Activated CD4-positive, alpha-beta T cell treated with anti-CD3 and anti-CD28 coated beads, Interleukin-2, amount 10 ng/mL, durations not matched to agents 24 days and 14 days (primary cell): ENCODE measurements at regions of chr17 and their contacts with region 1.

Region 1: DNA sequence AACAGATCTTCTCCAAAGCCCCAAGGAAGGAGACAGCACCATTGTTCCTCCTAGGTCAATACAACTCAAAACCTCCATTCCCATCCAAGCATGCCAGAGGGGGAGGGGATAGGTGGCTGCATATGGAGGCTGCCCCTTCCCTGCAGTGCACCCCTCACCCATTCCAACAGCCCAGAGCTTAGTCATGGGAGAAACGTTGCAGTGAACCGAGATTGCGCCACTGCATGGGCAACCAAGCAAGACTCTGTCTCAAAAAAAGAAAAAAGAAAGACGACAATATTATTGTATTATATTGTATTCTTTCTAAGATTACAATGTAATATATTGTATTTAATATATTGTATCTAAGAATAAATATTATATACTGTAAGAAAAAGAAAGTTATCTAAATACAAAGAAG is 36.4 kb upstream of the CD300E start:
- DNase-seq: no peak
- H3K4me3 Mint-ChIP-seq: no peak overlapping the region
- H3K27ac Mint-ChIP-seq: no peak overlapping the region
- H3K4me1 Mint-ChIP-seq: peaks cover 7% of the 10 kb centered on the region
- H3K27me3 Mint-ChIP-seq: peaks cover 46% of the 10 kb centered on the region

Region 2: GRCh38 chr17:74736513-74737298 is 76.8 kb after region 1 on chr17 and contains the start of gene RAB37:
- intact Hi-C with region 1: loop called (anchors 1 kb)
- DNase-seq: peak; percentile 85
- H3K4me3 Mint-ChIP-seq: peak within 1 kb of the TSS; percentile 89
- H3K27ac Mint-ChIP-seq: peak within 1 kb of the TSS; percentile 80
- H3K4me1 Mint-ChIP-seq: peaks cover 51% of the 10 kb centered on the region
- H3K27me3 Mint-ChIP-seq: peaks cover 10% of the 10 kb centered on the region
- total RNA-seq, gene RAB37: 5.5 and 7.5 TPM in 2 replicates

Region 3: DNA sequence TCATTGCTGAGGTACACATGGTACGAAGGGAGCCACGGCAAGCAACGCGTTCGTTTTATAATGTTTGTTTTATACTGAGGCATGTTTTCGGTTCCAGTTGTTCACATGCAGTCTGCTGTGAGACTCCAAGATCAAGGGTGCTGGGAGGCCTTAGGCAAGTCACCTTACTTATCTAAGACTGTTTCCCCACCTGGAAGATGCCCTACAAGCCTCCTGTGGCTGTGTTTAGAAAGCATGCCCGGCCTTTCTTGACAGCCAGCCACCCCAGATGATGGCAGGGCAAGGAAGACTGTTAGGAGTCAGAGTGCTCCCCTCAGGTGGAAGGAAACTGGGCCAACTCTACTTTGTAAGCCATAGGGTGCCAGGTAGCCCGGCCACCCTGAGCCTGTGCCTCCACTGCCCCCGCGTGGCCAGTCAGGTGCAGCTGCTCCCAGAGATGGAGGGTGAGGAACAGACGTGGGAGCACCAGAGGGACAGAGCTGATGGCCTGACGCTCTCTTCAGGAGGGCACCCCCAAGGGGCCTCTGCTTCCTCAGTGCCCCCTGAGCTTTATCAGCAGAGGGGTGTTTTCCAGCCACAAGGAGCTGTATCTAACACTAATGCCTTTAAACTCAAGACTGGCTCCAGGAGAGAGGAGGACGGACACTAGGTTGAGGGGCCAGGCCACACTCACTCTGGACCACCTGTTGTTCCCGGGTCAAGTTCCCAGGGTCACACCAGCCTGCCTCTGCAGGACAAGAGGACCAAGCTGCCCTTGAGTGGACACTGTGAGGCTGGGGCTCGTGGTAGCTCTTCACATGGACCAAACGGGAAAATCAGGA is 110.8 kb after region 1 on chr17:
- intact Hi-C with region 1: loop called (anchors 1 kb)
- DNase-seq: peak; percentile 91
- H3K4me3 Mint-ChIP-seq: no peak overlapping the region
- H3K27ac Mint-ChIP-seq: peak overlapping the region; percentile 65
- H3K4me1 Mint-ChIP-seq: peaks cover 19% of the 10 kb centered on the region
- H3K27me3 Mint-ChIP-seq: no peaks in the 10 kb centered on the region

Region 4: DNA sequence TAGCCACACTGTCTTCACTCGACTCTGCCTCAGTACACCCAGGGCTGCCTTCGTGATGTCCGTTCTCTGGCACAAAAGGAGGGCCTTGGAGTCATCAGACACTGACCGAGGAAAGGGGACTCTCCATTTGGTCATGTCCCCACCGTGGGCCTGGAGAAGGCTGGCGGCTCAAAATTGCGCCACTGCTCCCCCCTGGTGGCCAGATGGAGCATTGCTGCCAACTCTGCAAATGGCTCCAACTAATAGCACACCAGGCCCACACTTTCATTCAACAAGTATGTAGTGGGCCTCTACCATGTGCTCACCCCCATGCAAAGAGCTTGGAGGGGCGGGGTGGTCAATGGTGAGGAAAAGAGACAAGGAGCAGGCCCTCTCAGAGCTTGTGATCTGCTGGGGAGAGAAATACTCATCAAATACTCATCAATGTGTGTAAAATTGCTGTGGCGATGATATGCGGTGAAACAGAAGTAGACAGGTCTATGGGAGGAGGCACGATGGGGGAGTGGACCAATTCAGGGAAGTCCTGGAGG is 205.0 kb after region 1 on chr17:
- intact Hi-C with region 1: loop called (anchors 2 kb)
- DNase-seq: peak; percentile 92
- H3K4me3 Mint-ChIP-seq: no peak overlapping the region
- H3K27ac Mint-ChIP-seq: peak overlapping the region; percentile 64
- H3K4me1 Mint-ChIP-seq: peaks cover 15% of the 10 kb centered on the region
- H3K27me3 Mint-ChIP-seq: peaks cover 15% of the 10 kb centered on the region